Prostate gland (tissue), 2 donors: ENCODE measurements at regions of chr20 and their contacts with region 1.

Region 1: GRCh38 chr20:16476032-16476431 is 97.2 kb downstream of the KIF16B start:
- DNase-seq: peak; percentile 8
- H3K4me3 ChIP-seq: no peak overlapping the region
- H3K27ac ChIP-seq: no peak overlapping the region
- H3K4me1 ChIP-seq: no peaks in the 10 kb centered on the region
- H3K27me3 ChIP-seq: no peaks in the 10 kb centered on the region
- CTCF ChIP-seq: peak in 3 of 4 experiments; percentile 45 to 74 (median 60)
- POLR2A ChIP-seq: no peak

Region 2: GRCh38 chr20:15496501-15497037 is 979.5 kb before region 1 on chr20:
- intact Hi-C with region 1: no loop called
- DNase-seq: no peak
- H3K4me3 ChIP-seq: no peak overlapping the region
- H3K27ac ChIP-seq: no peak overlapping the region
- H3K4me1 ChIP-seq: no peaks in the 10 kb centered on the region
- H3K27me3 ChIP-seq: no peaks in the 10 kb centered on the region
- CTCF ChIP-seq: no peak
- POLR2A ChIP-seq: no peak

Region 3: DNA sequence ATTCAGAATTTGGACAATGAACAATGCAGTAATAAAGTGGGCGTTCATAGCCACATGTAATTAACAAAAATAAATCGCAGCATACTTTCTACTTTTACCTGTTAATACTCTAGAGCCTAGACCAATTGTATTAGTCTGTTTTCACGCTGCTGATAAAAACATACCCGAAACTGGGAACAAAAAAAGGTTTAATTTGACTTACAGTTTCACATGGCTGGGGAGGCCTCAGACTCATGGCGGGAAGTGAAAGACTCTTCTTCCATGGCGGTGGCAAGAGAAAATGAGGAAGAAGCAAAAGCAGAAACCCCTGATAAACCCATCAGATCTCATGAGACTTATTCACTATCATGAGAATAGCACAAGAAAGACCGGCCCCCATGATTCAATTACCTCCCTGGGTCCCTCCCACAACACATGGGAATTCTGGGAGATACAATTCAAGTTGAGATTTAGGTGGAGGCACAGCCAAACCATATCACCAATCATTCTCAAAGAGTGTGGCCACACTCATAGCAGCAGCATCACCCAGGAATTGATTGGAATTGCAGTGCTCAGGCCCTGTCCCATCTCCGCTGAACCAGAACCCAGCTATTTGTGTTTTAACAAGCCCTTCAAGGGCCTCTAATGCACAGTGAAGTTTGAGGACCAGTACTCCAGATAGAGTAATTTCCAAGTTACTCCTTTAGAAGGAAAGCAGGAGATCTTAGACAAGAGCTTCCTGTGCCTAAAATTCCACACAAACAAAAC is 552.8 kb before region 1 on chr20:
- intact Hi-C with region 1: loop called (anchors 10 kb)
- DNase-seq: no peak
- H3K4me3 ChIP-seq: no peak overlapping the region
- H3K27ac ChIP-seq: no peak overlapping the region
- H3K4me1 ChIP-seq: no peaks in the 10 kb centered on the region
- H3K27me3 ChIP-seq: no peaks in the 10 kb centered on the region
- CTCF ChIP-seq: no peak
- POLR2A ChIP-seq: no peak

Region 4: DNA sequence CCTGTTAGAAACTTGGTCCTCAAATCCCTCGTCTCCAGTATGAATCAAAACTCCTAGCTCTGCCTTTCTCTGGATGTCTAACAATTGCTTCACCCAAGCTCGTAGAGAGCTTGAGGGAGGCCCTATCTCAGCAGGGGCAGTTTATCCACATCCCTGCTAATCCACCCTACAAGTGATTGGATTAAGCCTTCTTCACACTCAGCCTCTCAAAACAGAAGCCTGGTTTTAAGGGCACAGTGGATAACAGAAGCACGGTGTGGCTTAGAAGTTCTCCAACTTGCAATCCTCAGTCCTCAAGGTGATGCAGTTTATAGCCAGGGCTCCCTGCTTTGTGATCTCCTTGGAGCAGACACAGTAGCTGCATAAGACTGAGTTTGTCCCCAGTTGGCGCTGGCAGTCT is 286.7 kb before region 1 on chr20:
- intact Hi-C with region 1: no loop called
- DNase-seq: no peak
- H3K4me3 ChIP-seq: no peak overlapping the region
- H3K27ac ChIP-seq: no peak overlapping the region
- H3K4me1 ChIP-seq: no peaks in the 10 kb centered on the region
- H3K27me3 ChIP-seq: no peaks in the 10 kb centered on the region
- CTCF ChIP-seq: no peak
- POLR2A ChIP-seq: no peak

Region 5: GRCh38 chr20:18066421-18067336 is 1590.6 kb after region 1 on chr20:
- intact Hi-C with region 1: no loop called
- DNase-seq: no peak
- H3K4me3 ChIP-seq: no peak overlapping the region
- H3K27ac ChIP-seq: no peak overlapping the region
- H3K4me1 ChIP-seq: no peaks in the 10 kb centered on the region
- H3K27me3 ChIP-seq: no peaks in the 10 kb centered on the region
- CTCF ChIP-seq: no peak
- POLR2A ChIP-seq: no peak